ENCODE measurements at regions of chr22 and their contacts with region 1.

Region 1: DNA sequence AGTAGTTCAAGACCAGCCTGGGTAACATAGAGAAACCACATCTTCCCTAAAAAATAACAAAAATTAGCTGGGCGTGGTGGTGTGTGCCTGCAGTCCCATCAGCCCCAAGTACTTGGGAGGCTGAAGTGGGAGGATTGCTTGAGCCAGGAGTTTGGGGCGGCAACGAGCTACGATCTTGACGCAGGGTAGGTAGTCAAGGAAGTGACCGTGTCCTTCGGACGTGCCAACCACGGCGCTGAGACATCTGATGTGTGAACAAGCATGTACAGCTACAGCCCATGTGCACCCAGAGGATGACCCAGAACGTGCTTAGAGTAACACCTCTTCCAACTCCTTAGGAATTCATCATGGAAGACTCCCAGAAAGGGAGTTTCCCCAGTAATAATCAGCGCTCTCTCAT is 21.4 kb downstream of the RGL4 start:
- DNase-seq: no peak
- H3K4me3 ChIP-seq: no peak overlapping the region
- H3K27ac ChIP-seq: no peak overlapping the region
- H3K4me1 ChIP-seq: peaks cover 3 to 17% (median 12%) of the 10 kb centered on the region in 4 experiments
- H3K27me3 ChIP-seq: no peaks in the 10 kb centered on the region

Region 2: DNA sequence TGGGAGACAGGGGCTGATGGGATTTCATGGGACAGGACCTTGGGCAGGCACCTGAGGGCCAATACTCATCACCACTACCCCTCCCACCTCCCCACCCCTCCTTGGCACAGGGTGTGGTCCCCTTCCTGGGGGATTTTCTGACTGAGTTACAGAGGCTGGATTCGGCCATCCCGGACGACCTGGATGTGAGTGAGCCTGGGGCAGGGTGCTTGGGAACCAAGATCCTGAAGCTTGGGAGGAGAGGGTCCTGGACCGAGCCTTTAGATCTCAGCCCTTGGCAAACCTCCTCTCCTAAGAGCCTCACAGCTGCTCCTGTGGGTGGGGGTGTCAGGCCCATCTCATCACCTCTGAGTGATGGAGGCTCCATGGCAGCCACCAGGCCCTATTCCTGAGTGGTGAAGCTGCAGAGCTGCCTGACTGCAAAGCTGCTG is 15.2 kb before region 1 on chr22:
- CTCF ChIA-PET with region 1: interaction called, 16 read pairs
- POLR2A ChIA-PET with region 1: interaction called, 6 read pairs
- DNase-seq: no peak
- H3K4me3 ChIP-seq: peak overlapping the region in 5 of 7 experiments; percentile 21 to 58 (median 37)
- H3K27ac ChIP-seq: peak overlapping the region; percentile 89 to 96
- H3K4me1 ChIP-seq: peaks cover 10 to 46% (median 41%) of the 10 kb centered on the region in 4 experiments
- H3K27me3 ChIP-seq: no peaks in the 10 kb centered on the region

Region 3: DNA sequence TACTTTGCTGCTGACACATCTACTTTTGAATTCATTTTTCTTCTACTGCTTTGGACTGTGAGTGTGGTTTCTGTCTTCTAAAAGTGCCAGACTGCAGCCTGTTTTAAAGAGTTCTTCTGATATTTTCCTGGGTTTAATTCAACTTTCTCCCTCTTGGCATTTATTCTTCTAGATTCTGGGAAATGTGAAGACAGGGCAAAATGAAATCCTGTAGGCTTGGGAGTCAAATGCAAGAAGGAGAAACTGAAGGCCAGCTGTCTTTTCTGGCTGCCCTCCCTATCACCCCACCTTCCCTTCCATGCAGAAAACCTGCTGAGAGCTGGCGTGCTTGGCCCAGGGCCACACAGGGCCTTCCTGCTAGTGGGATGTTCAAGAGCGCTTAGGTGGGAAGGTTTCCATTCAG is 31.0 kb after region 1 on chr22:
- CTCF ChIA-PET with region 1: no interaction called
- POLR2A ChIA-PET with region 1: no interaction called
- DNase-seq: no peak
- H3K4me3 ChIP-seq: no peak overlapping the region
- H3K27ac ChIP-seq: no peak overlapping the region
- H3K4me1 ChIP-seq: peaks cover 2 to 18% (median 11%) of the 10 kb centered on the region in 4 experiments
- H3K27me3 ChIP-seq: no peaks in the 10 kb centered on the region

Measured in common myeloid progenitor, CD34-positive (primary cell).